ENCODE measurements at regions of chr6 and their contacts with region 1.

Region 1: DNA sequence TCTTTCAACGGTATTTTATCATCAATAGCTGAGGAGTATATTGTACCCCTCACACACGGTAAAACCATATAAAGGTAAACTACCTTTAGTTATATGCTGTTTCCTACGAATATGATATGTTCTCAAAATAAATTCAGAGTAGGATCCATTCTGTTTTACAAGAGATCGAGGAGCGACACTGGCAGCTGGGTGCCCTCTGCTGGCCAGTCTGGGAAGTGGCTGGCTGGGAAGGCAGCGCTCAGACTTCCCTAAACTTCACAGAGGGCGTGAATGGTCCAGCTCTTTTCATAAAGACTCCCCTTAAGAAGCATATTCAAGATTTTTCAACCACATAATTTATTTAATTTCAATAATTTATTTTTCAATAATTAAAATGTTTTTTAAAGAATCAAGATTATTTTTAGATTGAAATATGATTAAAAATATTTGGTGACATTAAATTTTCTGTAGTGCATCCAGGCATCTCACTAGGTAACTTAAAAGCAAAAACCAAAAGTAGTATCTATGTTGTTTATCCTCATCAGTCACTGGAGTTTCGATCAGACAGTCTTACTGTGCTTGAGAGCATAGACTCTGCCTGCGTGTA is 187.5 kb upstream of the PDE10A start:
- DNase-seq: peak; percentile 71 to 83 (median 78)
- ATAC-seq: peak; percentile 93
- H3K4me3 ChIP-seq: no peak overlapping the region
- H3K27ac ChIP-seq: no peak overlapping the region
- H3K4me1 ChIP-seq: peaks cover 0 to 11% of the 10 kb centered on the region in 2 experiments; a peak in 1 of 5 replicates
- H3K27me3 ChIP-seq: peaks cover 16 to 47% of the 10 kb centered on the region in 2 experiments; a peak in 4 of 5 replicates
- CTCF ChIP-seq: peak; percentile 84 to 96 (median 90)
- EP300 ChIP-seq: no peak
- POLR2A ChIP-seq: no peak
- RAD21 ChIP-seq: peak; percentile 83

Region 2: DNA sequence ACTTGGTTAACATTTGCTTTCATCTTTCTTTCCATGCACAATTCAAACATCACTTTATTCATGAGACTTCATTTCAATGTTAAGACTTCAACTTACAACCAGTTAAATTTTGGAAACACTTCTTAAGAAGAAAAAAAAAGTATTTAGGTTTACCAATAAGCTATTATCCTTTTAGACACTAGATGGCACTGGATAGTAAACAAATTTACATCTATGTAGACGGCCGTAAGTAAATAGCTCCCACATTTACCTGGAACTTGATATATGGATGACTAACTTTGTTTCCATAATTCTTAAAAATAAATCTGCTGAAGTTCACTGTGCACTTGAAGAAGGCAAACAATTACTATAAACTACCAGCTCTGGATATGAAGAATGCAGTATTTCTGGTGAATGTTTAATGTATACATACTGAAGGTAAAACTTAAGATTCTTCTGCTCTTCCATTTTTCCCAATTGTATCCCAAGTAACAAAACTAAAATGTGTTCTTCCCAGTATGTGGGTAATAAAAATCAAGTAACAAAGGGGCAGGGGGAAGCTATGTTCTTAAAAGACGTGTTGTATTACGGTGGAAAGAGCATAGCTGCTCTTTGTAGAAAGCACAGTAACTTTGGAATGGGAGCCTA is 410.5 kb before region 1 on chr6:
- CTCF ChIA-PET with region 1: interaction called, 5 read pairs
- POLR2A ChIA-PET with region 1: no interaction called
- in situ Hi-C with region 1: no loop called
- intact Hi-C with region 1: loop called (anchors 1 kb)
- DNase-seq: peak in 1 of 4 experiments; percentile 20
- ATAC-seq: no peak
- H3K4me3 ChIP-seq: no peak overlapping the region
- H3K27ac ChIP-seq: no peak overlapping the region
- H3K4me1 ChIP-seq: no peaks in the 10 kb centered on the region
- H3K27me3 ChIP-seq: no peaks in the 10 kb centered on the region
- CTCF ChIP-seq: peak in 2 of 3 experiments; percentile 32 to 50; a peak in 2 of 6 replicates
- EP300 ChIP-seq: no peak
- POLR2A ChIP-seq: no peak
- RAD21 ChIP-seq: peak; percentile 59 to 61

Region 3: DNA sequence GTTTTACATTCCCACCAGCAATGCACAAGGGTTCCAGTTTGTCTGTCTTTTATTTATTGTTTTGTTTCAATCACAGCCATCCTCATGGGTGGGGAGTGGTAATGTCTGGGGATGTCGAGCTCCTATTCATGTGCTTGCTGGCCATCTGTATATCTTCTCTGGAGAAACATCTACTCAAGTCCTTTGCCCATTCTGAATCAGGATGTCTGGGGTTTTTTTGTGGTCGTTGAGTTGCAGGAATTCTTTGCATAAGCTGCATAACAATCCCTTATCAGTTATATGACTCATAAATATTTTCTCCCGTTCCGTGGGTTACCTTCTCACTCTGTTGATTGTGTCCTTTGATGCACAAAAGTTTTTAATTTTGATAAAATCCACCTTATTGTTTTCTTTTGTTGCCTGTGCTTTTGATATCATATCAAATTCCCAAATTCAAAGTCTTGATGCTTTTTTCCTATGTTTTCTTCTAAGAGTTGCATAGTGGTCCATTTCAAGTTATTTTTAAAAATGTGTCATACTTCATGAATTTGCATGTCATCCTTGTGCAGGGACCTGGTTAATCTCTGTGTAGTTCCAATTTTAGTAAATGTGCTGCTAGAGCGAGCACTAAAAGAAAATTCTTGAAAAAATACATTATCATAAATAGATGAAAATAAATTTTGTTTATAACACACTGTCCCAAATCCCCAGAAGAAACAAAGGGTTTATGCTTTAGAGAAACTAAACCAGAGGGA is 132.6 kb before region 1 on chr6:
- CTCF ChIA-PET with region 1: no interaction called
- POLR2A ChIA-PET with region 1: no interaction called
- in situ Hi-C with region 1: loop called (anchors 10 kb)
- intact Hi-C with region 1: no loop called
- DNase-seq: no peak
- ATAC-seq: no peak
- H3K4me3 ChIP-seq: no peak overlapping the region
- H3K27ac ChIP-seq: no peak overlapping the region
- H3K4me1 ChIP-seq: no peaks in the 10 kb centered on the region
- H3K27me3 ChIP-seq: peaks cover 10 to 11% of the 10 kb centered on the region in 2 experiments; a peak in 4 of 5 replicates
- CTCF ChIP-seq: no peak
- EP300 ChIP-seq: no peak
- POLR2A ChIP-seq: no peak
- RAD21 ChIP-seq: no peak

Region 4: DNA sequence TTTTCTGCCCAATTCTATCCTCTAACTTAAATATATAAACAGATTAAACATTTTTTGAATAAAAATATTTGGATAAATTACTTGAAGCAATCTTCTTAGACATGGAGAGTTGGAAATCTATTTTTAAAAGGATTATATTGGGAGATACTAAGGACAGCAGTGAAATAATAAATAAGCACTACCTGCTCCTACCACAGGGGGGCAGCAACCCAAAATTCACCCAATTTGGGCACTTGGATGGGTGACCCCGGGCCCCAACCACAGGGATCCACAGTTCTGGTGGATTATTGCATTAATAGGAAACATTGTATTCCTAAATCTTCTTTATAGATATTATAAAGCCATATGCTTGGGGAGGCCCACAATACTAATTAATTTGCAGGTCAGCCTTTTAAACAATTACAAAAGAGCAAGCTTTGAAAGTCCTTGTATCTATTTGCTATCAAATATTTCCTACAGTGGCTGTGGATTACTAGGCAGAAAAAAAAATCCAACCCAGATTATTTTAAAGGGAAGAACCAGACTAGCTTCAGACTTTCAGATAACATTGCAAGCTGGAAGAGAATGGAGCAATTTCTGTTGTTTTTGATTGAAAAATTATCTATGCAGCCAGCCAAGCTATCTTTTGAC is 121.1 kb before region 1 on chr6:
- CTCF ChIA-PET with region 1: interaction called, 10 read pairs
- POLR2A ChIA-PET with region 1: interaction called, 3 read pairs
- in situ Hi-C with region 1: no loop called
- intact Hi-C with region 1: loop called (anchors 1 kb)
- DNase-seq: peak; percentile 55 to 85 (median 79)
- ATAC-seq: peak; percentile 86
- H3K4me3 ChIP-seq: no peak overlapping the region
- H3K27ac ChIP-seq: no peak overlapping the region
- H3K4me1 ChIP-seq: no peaks in the 10 kb centered on the region
- H3K27me3 ChIP-seq: peaks cover 0 to 18% of the 10 kb centered on the region in 2 experiments; a peak in 1 of 5 replicates
- CTCF ChIP-seq: peak; percentile 62 to 80 (median 78)
- EP300 ChIP-seq: no peak
- POLR2A ChIP-seq: no peak
- RAD21 ChIP-seq: peak; percentile 58 to 62

Region 5: GRCh38 chr6:165744555-165745228 is 105.8 kb before region 1 on chr6:
- CTCF ChIA-PET with region 1: no interaction called
- POLR2A ChIA-PET with region 1: no interaction called
- in situ Hi-C with region 1: no loop called
- intact Hi-C with region 1: loop called (anchors 5 kb)
- DNase-seq: no peak
- ATAC-seq: no peak
- H3K4me3 ChIP-seq: no peak overlapping the region
- H3K27ac ChIP-seq: no peak overlapping the region
- H3K4me1 ChIP-seq: no peaks in the 10 kb centered on the region
- H3K27me3 ChIP-seq: no peaks in the 10 kb centered on the region
- CTCF ChIP-seq: no peak
- EP300 ChIP-seq: no peak
- POLR2A ChIP-seq: no peak
- RAD21 ChIP-seq: no peak

Region 6: GRCh38 chr6:165766457-165766856 is 84.1 kb before region 1 on chr6:
- CTCF ChIA-PET with region 1: no interaction called
- POLR2A ChIA-PET with region 1: no interaction called
- in situ Hi-C with region 1: no loop called
- intact Hi-C with region 1: no loop called
- DNase-seq: no peak
- ATAC-seq: no peak
- H3K4me3 ChIP-seq: no peak overlapping the region
- H3K27ac ChIP-seq: no peak overlapping the region
- H3K4me1 ChIP-seq: no peaks in the 10 kb centered on the region
- H3K27me3 ChIP-seq: 0 out of 5 replicates have a peak, but pooled peaks cover 0 to 4% of the 10 kb centered on the region in 2 experiments
- CTCF ChIP-seq: no peak
- EP300 ChIP-seq: no peak
- POLR2A ChIP-seq: no peak
- RAD21 ChIP-seq: no peak

Region 7: GRCh38 chr6:165794179-165794601 is 56.3 kb before region 1 on chr6:
- CTCF ChIA-PET with region 1: no interaction called
- POLR2A ChIA-PET with region 1: no interaction called
- in situ Hi-C with region 1: no loop called
- intact Hi-C with region 1: no loop called
- DNase-seq: no peak
- ATAC-seq: no peak
- H3K4me3 ChIP-seq: no peak overlapping the region
- H3K27ac ChIP-seq: no peak overlapping the region
- H3K4me1 ChIP-seq: no peaks in the 10 kb centered on the region
- H3K27me3 ChIP-seq: peaks cover 2 to 16% of the 10 kb centered on the region in 2 experiments; a peak in 2 of 5 replicates
- CTCF ChIP-seq: no peak
- EP300 ChIP-seq: no peak
- POLR2A ChIP-seq: no peak
- RAD21 ChIP-seq: no peak